Activated CD8-positive, alpha-beta T cell treated with anti-CD3 and anti-CD28 coated beads, Interleukin-2, amount 10 ng/mL, durations not matched to agents 7 days and 5 days (primary cell): ENCODE measurements at regions of chr1 and their contacts with region 1.

Region 1: DNA sequence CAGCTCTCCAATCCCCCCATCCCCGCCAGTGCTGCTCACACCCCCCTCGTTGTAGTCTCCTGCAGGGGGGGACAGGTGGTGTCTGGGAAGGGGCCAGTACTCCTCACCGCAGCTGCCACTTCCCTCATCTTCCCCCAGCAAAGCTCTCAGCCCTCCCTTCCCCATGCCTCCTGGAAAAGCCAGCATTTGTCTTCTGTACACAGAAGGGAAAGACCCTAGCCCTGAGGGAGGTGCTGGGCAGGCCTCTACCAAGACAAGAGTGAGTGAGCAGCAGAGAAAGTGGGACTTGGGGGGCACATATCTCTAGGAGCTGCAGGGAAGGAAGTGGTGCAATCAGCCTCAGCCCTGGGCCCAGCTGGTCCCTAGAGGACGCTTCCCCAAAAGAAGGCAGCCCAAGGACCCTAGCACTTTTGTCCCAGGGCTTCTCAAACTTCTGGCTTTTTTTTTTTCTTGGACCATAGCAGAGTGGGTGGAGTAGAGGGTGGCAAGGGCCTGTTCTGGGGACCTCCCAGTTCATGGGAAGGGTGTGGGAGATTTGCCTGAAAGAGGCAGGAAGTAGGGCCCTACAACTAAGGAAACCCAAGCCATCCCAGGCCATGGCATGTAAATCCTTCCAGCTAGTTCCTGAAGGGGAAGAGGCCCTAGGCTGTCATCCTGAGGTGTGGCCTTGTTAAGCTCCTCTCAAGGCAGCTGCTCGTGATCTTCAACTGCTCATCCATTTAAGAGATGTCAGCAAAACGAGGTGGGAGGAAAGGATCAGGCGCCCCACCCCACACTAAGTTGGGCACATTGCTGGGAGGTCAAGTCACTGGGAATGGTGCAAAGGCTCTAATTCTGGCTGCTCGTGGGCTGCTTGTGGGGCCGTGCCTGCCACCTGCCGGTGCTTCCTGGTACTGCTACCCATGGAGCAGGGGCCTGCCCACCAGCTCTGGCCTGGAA is 12.6 kb downstream of the ZC3H12A start:
- DNase-seq: peak; percentile 82
- ATAC-seq: peak; percentile 63
- H3K4me3 Mint-ChIP-seq: no peak overlapping the region
- H3K27ac Mint-ChIP-seq: peak overlapping the region; percentile 84
- H3K4me1 Mint-ChIP-seq: peaks cover 17% of the 10 kb centered on the region
- H3K27me3 Mint-ChIP-seq: no peaks in the 10 kb centered on the region

Region 2: GRCh38 chr1:37410815-37411214 is 76.1 kb before region 1 on chr1:
- CTCF ChIA-PET with region 1: no interaction called
- POLR2A ChIA-PET with region 1: no interaction called
- DNase-seq: peak; percentile 44
- ATAC-seq: no peak
- H3K4me3 Mint-ChIP-seq: no peak overlapping the region
- H3K27ac Mint-ChIP-seq: no peak overlapping the region
- H3K4me1 Mint-ChIP-seq: no peaks in the 10 kb centered on the region
- H3K27me3 Mint-ChIP-seq: peaks cover 4% of the 10 kb centered on the region

Region 3: DNA sequence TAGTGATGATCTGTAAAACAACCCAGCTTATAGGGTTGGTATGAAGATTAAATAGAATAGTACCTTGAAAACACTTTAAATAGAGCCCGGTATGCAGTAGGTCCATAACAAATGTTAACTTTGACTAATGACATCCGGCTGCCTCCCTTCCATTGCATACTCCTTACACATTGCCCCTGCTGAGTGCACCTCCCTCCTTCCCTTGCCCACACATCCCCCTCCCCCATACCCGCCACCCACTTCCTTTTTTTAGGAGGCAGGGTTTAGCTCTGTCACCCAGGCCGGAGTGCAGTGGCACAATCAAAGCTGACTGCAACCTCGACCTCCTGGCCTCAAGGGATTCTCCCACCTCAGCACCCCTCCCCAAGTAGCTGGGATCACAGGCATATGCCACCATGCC is 37.0 kb before region 1 on chr1:
- CTCF ChIA-PET with region 1: interaction called, 269 read pairs
- POLR2A ChIA-PET with region 1: interaction called, 3 read pairs
- DNase-seq: peak; percentile 53
- ATAC-seq: no peak
- H3K4me3 Mint-ChIP-seq: no peak overlapping the region
- H3K27ac Mint-ChIP-seq: peak overlapping the region; percentile 60
- H3K4me1 Mint-ChIP-seq: peaks cover 15% of the 10 kb centered on the region
- H3K27me3 Mint-ChIP-seq: peaks cover 5% of the 10 kb centered on the region

Region 4: GRCh38 chr1:37465593-37466517 is 21.1 kb before region 1 on chr1:
- CTCF ChIA-PET with region 1: interaction called, 269 read pairs
- POLR2A ChIA-PET with region 1: interaction called, 5 read pairs
- DNase-seq: no peak
- ATAC-seq: no peak
- H3K4me3 Mint-ChIP-seq: no peak overlapping the region
- H3K27ac Mint-ChIP-seq: no peak overlapping the region
- H3K4me1 Mint-ChIP-seq: peaks cover 12% of the 10 kb centered on the region
- H3K27me3 Mint-ChIP-seq: no peaks in the 10 kb centered on the region

Region 5: GRCh38 chr1:37498872-37499617 is 12.1 kb after region 1 on chr1:
- CTCF ChIA-PET with region 1: interaction called, 111 read pairs
- POLR2A ChIA-PET with region 1: interaction called, 3 read pairs
- DNase-seq: no peak
- ATAC-seq: no peak
- H3K4me3 Mint-ChIP-seq: no peak overlapping the region
- H3K27ac Mint-ChIP-seq: no peak overlapping the region
- H3K4me1 Mint-ChIP-seq: peaks cover 2% of the 10 kb centered on the region
- H3K27me3 Mint-ChIP-seq: no peaks in the 10 kb centered on the region

Region 6: GRCh38 chr1:37514350-37515184 is 27.6 kb after region 1 on chr1 and contains the start of gene MEAF6:
- CTCF ChIA-PET with region 1: interaction called, 21 read pairs
- POLR2A ChIA-PET with region 1: interaction called, 4 read pairs
- DNase-seq: peak; percentile 87
- ATAC-seq: peak; percentile 96
- H3K4me3 Mint-ChIP-seq: peak within 1 kb of the TSS; percentile 96
- H3K27ac Mint-ChIP-seq: peak within 1 kb of the TSS; percentile 95
- H3K4me1 Mint-ChIP-seq: peaks cover 48% of the 10 kb centered on the region
- H3K27me3 Mint-ChIP-seq: no peaks in the 10 kb centered on the region
- total RNA-seq, gene MEAF6: 70.8 to 73.0 TPM

Region 7: DNA sequence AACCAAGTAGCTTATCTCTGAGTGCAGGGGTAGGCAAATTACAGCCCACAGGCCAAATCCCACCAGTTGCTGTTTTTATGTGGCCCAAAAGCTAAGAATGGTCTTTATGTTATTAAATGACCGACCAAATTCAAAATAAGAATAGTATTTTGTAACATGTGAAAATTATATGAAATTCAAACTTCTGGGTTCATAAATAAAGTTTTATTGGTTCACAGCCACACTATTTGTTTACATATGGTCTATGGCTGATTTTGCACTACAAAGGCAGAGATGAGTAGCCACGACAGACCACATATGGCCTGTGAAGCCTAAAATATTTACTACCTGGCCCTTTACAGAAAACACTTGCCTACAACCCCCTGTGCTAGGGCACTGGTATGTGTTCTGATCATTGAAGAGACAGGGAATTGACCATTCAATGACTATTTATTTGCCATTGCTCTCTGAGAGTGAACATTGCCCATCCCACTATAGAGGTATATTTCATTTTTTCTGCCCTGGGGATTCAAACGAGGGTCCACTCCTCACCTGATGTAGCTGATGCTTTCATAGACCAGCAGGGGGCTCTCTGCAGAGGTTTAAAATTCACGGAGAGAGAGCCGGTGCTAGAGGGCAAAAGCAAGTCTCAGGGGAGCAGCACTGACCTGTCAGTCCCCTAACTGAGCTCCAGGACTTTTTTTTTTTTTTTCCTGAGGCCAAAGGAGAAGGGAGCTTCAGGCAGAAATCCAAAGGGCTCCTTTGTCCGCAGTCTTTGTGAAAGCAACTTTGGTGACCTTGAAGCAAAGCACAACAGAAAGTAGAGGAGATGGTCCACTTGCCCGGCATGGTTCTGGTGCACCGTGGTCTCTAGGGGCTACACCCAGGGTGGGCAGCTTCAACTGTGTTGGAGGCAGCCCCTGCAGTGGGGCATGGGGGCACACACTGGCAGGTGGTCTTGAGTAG is 116.1 kb after region 1 on chr1:
- CTCF ChIA-PET with region 1: interaction called, 10 read pairs
- POLR2A ChIA-PET with region 1: no interaction called
- DNase-seq: peak; percentile 53
- ATAC-seq: peak; percentile 76
- H3K4me3 Mint-ChIP-seq: no peak overlapping the region
- H3K27ac Mint-ChIP-seq: no peak overlapping the region
- H3K4me1 Mint-ChIP-seq: no peaks in the 10 kb centered on the region
- H3K27me3 Mint-ChIP-seq: peaks cover 21% of the 10 kb centered on the region

Region 8: GRCh38 chr1:37692078-37692833 is 205.3 kb after region 1 on chr1 and contains the start of gene CDCA8:
- CTCF ChIA-PET with region 1: interaction called, 11 read pairs
- POLR2A ChIA-PET with region 1: no interaction called
- DNase-seq: peak; percentile 99
- ATAC-seq: peak; percentile 88
- H3K4me3 Mint-ChIP-seq: peak within 1 kb of the TSS; percentile 99
- H3K27ac Mint-ChIP-seq: peak within 1 kb of the TSS; percentile 97
- H3K4me1 Mint-ChIP-seq: peaks cover 54% of the 10 kb centered on the region
- H3K27me3 Mint-ChIP-seq: no peaks in the 10 kb centered on the region
- total RNA-seq, gene CDCA8: 97.3 to 102 TPM